ENCODE measurements at regions of chr16 and their contacts with region 1.

Region 1: DNA sequence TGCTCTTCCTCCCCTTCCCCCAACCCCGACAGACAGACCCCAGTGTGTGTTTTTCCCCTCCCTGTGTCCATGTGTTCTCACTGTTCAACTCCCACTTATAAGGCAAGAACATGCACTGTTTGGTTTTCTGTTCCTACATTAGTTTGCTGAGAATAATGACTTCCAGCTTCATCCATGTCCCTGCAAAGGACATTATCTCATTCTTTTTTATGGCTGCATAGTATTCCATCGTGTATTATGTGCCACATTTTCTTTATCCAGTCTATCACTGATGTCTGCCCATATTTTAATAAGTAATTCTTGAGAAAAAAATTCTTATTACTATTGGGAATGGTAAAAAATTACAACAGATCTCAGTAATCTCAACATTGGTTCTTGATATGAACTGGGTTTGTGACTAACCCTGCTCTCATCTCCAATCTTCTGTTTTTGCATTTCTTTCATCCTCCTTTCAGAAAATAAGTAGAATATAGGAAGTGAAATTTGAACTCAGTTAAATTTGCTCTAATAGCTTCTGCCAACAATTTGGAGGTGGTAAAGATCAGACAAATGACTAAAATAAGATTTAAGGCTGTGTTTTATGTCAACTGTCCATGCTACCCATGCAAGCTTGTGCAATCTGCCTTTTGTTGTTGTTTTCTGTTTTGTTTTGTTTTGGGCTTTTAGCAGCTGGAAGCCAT is 11.1 kb downstream of the MARF1 start:
- DNase-seq: no peak
- H3K4me3 ChIP-seq: no peak overlapping the region
- H3K27ac ChIP-seq: no peak overlapping the region
- H3K4me1 ChIP-seq: no peaks in the 10 kb centered on the region
- H3K27me3 ChIP-seq: no peaks in the 10 kb centered on the region
- CTCF ChIP-seq: no peak
- EP300 ChIP-seq: no peak
- RAD21 ChIP-seq: no peak

Region 2: DNA sequence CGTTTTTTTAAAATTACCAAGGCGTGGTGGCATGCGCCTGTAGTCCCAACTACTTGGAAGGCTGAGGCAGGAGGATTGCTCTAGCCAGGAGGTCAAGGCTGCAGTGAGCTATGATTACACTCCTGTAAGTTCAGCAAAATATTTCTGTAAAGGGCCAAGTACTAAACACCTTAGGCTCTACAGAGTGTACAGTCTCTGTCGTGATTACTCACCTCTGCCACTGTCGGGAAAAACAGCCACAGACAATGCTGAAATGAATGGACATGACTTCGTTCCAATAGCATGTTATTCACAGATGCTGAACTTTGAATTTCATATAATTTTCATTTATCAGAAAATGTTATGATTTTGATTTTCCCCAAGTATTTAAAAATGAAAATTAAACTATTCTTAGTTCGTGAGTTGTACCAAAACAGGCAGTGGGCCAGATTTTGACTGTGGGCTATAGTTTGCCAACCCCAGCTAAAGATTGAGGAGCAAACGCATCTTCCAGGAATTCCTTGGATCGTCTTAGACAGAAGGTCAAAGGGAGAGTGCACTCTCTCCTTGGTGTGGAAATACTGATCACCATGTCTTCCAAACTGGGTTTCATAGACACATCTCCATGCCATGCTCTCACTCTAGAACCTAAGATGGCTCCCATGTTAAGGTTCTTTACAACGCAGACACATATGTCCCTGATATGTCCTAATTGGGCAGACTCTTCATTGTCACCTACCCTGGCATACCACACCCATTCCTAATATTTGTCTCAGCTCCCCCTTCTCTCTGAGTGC is 78.4 kb before region 1 on chr16:
- CTCF ChIA-PET with region 1: no interaction called
- POLR2A ChIA-PET with region 1: no interaction called
- DNase-seq: no peak
- H3K4me3 ChIP-seq: no peak overlapping the region
- H3K27ac ChIP-seq: no peak overlapping the region
- H3K4me1 ChIP-seq: no peaks in the 10 kb centered on the region; a peak in 1 of 4 replicates
- H3K27me3 ChIP-seq: no peaks in the 10 kb centered on the region
- CTCF ChIP-seq: no peak
- EP300 ChIP-seq: no peak
- RAD21 ChIP-seq: no peak

Region 3: GRCh38 chr16:15643048-15643945 is 11.4 kb after region 1 on chr16 and contains the start of gene MARF1:
- CTCF ChIA-PET with region 1: interaction called, 10 read pairs
- POLR2A ChIA-PET with region 1: interaction called, 3 read pairs
- DNase-seq: peak; percentile 94
- H3K4me3 ChIP-seq: peak within 1 kb of the TSS; percentile 90 to 100
- H3K27ac ChIP-seq: peak within 1 kb of the TSS; percentile 99 to 100
- H3K4me1 ChIP-seq: peaks cover 0 to 12% of the 10 kb centered on the region in 2 experiments; a peak in 3 of 4 replicates
- H3K27me3 ChIP-seq: no peaks in the 10 kb centered on the region
- CTCF ChIP-seq: peak; percentile 60
- EP300 ChIP-seq: no peak
- RAD21 ChIP-seq: peak; percentile 31; the same call in 1 of the 2 replicates
- polyA plus RNA-seq, gene MARF1: 10.3 TPM in 2 replicates